Activated T-helper 2 cell treated with anti-CD3 and anti-CD28 coated beads, Interferon-gamma antibody, Interleukin-2, Interleukin-4, amounts not matched to agents 10 μg/mL and 5 μg/mL and 100 μg/mL, durations not matched to agents 14 hours and 24 hours and 36 hours (primary cell): ENCODE measurements at regions of chr20 and their contacts with region 1.

Region 1: GRCh38 chr20:50070991-50071888 is 41.7 kb downstream of the UBE2V1 start:
- DNase-seq: peak; percentile 84
- H3K4me3 Mint-ChIP-seq: peak overlapping the region; percentile 69
- H3K27ac Mint-ChIP-seq: no peak overlapping the region
- H3K4me1 Mint-ChIP-seq: peaks cover 2% of the 10 kb centered on the region
- H3K27me3 Mint-ChIP-seq: no peaks in the 10 kb centered on the region

Region 2: DNA sequence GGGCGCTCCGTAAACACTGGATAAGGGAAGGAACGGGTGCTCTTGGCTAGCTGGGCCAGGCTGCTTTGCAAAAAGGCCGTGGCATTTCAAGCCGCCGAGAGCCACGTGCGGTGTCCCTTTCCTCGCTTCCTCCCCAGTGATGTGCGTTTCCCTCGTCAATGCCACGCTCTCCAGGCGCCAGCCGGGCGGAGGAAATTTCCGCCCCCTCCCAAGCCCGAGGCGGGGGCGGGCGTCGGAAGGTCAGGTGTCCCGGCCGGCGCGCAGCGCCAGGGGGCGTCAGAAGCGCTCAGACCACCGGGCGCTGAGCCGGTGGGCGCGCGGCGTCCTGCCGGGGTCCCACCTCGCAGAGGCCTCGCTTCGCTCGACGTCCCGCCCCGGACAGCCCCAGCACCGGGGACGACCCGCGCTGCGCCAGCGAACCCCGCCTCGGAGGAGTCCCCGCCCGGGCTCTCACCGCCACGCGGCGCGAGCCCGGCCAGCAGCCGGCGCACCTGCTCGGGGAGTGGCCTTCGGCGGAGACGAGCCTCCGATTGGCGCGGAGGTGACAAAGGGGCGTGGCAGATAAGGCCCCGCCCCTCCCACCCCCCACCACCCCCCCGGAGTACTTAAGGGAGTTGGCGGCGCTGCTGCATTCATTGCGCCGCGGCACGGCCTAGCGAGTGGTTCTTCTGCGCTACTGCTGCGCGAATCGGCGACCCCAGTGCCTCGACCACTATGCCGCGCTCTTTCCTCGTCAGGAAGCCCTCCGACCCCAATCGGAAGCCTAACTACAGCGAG is 88.7 kb before region 1 on chr20 and contains the start of gene SNAI1:
- intact Hi-C with region 1: loop called (anchors 1 kb)
- DNase-seq: peak; percentile 77
- H3K4me3 Mint-ChIP-seq: peak within 1 kb of the TSS; percentile 66
- H3K27ac Mint-ChIP-seq: peak within 1 kb of the TSS; percentile 70
- H3K4me1 Mint-ChIP-seq: peaks cover 13% of the 10 kb centered on the region
- H3K27me3 Mint-ChIP-seq: peaks cover 31% of the 10 kb centered on the region
- total RNA-seq, gene SNAI1: 1.3 and 1.6 TPM in 2 replicates